Activated naive CD4-positive, alpha-beta T cell treated with anti-CD3 and anti-CD28 coated beads for 36 hours (primary cell): ENCODE measurements at regions of chr1 and their contacts with region 1.

Region 1: DNA sequence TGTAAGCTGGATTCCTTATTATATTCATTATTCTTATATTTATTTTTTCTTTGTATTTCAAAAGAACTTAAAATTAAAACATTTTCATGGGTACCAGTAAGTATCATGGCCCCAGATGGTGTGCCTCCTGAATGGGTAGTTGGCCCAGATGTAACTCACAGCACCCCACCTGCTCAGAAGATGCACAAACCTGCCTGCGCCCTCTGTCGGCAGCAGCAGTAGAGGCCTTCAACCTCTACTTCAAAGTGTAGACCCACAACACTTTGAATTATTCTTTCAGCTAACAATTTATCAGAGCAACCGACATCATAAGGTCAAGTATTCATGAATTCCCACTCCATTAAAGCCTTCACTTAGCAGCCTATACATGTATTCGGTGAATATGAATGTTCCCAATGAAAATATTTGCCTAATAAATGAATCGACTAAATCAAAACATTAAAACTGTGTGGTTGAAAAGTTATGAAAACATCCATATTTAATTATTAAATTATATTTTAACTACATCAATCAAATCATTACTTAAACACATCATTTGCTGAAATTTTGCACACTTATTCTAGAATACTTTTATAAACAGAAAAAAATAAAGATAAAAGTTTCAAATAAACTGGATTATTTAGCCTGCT is 25.4 kb downstream of the PIGM start:
- DNase-seq: peak; percentile 84
- H3K4me3 Mint-ChIP-seq: no peak overlapping the region
- H3K27ac Mint-ChIP-seq: no peak overlapping the region
- H3K4me1 Mint-ChIP-seq: no peaks in the 10 kb centered on the region
- H3K27me3 Mint-ChIP-seq: no peaks in the 10 kb centered on the region

Region 2: GRCh38 chr1:159780583-159781582 is 225.5 kb before region 1 on chr1 and contains the start of gene DUSP23:
- CTCF ChIA-PET with region 1: interaction called, 6 read pairs
- intact Hi-C with region 1: loop called (anchors 1 kb)
- DNase-seq: peak; percentile 96
- H3K4me3 Mint-ChIP-seq: peak within 1 kb of the TSS; percentile 73
- H3K27ac Mint-ChIP-seq: no peak within 1 kb of the TSS
- H3K4me1 Mint-ChIP-seq: peaks cover 7% of the 10 kb centered on the region
- H3K27me3 Mint-ChIP-seq: no peaks in the 10 kb centered on the region
- total RNA-seq, gene DUSP23: 13.0 to 14.1 TPM

Region 3: DNA sequence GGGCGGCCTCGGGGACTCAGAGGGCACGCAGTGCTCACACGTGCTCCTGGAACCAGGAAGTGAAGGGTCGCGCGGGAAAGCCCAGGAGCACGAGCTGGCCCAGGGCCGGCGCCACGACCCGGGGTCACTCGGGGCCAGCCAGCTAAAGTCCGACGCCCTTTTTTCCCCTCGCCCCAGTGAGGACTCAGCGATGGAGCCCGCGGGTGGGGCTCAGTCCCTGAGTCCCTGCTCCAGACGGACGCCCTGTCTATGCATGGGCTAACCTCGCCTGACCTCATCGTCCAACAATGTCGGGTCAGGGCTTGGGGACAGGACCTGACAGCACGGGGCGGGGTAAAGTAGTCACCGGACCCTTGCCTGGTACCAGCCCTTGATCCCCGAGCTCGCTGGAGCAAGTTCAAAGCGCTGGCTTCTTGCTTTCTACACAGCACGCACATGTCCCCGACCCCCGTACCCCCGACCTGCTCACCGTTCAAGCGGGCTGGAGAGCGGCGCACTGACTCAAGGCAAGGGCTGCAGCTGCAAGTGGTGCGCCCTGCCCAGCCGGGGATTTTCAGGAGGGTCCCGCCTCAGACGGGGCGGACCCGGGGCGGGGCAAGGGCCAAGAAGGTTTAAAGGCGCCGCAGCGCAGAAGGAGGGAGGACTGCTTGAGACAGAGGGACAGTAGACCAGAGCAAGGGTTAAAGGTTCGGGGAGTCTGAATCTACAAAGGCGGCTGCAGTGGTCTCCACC is 81.3 kb before region 1 on chr1 and contains the start of gene TAGLN2:
- CTCF ChIA-PET with region 1: interaction called, 228 read pairs
- intact Hi-C with region 1: no loop called
- DNase-seq: peak; percentile 89
- H3K4me3 Mint-ChIP-seq: peak within 1 kb of the TSS; percentile 91
- H3K27ac Mint-ChIP-seq: peak within 1 kb of the TSS; percentile 93
- H3K4me1 Mint-ChIP-seq: peaks cover 42% of the 10 kb centered on the region
- H3K27me3 Mint-ChIP-seq: no peaks in the 10 kb centered on the region
- total RNA-seq, gene TAGLN2: 453 to 454 TPM

Region 4: GRCh38 chr1:159953536-159954515 is 52.6 kb before region 1 on chr1 and contains the start of gene SLAMF9:
- CTCF ChIA-PET with region 1: interaction called, 20 read pairs
- intact Hi-C with region 1: no loop called
- DNase-seq: no peak
- H3K4me3 Mint-ChIP-seq: no peak within 1 kb of the TSS
- H3K27ac Mint-ChIP-seq: no peak within 1 kb of the TSS
- H3K4me1 Mint-ChIP-seq: peaks cover 2% of the 10 kb centered on the region
- H3K27me3 Mint-ChIP-seq: peaks cover 17% of the 10 kb centered on the region
- total RNA-seq, gene SLAMF9: not detected

Region 5: DNA sequence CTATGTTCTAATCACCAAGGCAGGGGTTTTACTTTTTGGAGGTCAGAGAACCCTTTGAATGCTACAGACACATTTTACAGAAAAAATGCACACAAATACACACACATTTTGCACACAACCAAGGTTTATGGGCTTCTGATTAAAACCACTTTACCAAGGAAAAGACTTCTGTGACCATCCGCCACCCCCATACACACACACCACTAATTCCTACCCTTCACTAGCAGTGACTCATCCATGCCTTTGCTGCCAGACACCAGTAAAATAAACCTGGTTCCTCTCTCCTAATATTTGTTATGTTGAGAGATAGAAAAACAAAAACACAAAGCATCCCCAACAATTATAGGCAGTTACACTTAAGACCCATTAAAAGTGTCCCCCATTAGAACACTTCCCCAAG is 12.5 kb after region 1 on chr1:
- CTCF ChIA-PET with region 1: interaction called, 35 read pairs
- intact Hi-C with region 1: no loop called
- DNase-seq: no peak
- H3K4me3 Mint-ChIP-seq: no peak overlapping the region
- H3K27ac Mint-ChIP-seq: no peak overlapping the region
- H3K4me1 Mint-ChIP-seq: no peaks in the 10 kb centered on the region
- H3K27me3 Mint-ChIP-seq: peaks cover 3% of the 10 kb centered on the region